HepG2 (cell line): ENCODE measurements at regions of chr3 and their contacts with region 1.

Region 1: DNA sequence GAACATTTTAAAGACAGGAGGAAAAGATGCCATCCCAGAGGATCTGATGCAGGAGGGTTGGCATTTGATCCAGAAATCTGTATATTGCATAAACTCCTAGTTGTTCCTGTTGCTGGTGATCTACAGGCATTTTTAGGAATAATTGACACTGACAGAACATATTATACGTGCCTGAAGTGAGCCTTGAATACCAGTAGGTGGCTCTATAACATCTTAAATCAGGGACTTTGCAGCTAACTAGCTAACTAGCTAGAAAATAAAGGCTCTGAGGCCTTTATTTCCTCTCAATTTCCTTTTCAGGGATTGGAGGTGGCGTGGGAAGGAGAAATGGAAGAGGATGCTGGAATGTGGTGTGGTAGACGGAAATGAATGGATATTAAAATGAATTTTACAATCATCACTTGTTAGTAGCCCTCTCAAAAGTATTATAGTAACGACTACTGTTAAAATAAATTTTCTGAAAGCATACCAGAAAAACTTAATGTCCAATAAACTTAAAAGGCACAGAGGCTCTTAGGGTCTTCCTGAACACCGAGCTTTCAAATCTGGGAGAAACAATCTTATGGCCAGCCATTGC is 73.9 kb upstream of the ZBED2 start:
- DNase-seq: peak; percentile 50
- ATAC-seq: peak; percentile 79
- H3K4me3 ChIP-seq: no peak overlapping the region
- H3K27ac ChIP-seq: no peak overlapping the region
- H3K4me1 ChIP-seq: peaks cover 10% of the 10 kb centered on the region
- H3K27me3 ChIP-seq: no peaks in the 10 kb centered on the region; a peak in 1 of 5 replicates
- CTCF ChIP-seq: peak; percentile 81
- EP300 ChIP-seq: no peak
- POLR2A ChIP-seq: no peak
- RAD21 ChIP-seq: peak; percentile 75

Region 2: GRCh38 chr3:111691293-111691909 is 22.4 kb after region 1 on chr3:
- CTCF ChIA-PET with region 1: interaction called, 48 read pairs
- POLR2A ChIA-PET with region 1: no interaction called
- in situ Hi-C with region 1: no loop called
- intact Hi-C with region 1: loop called (anchors 1 kb)
- DNase-seq: peak; percentile 51
- ATAC-seq: peak; percentile 91
- H3K4me3 ChIP-seq: no peak overlapping the region
- H3K27ac ChIP-seq: no peak overlapping the region
- H3K4me1 ChIP-seq: peaks cover 11% of the 10 kb centered on the region
- H3K27me3 ChIP-seq: no peaks in the 10 kb centered on the region
- CTCF ChIP-seq: peak; percentile 63
- EP300 ChIP-seq: no peak
- POLR2A ChIP-seq: no peak
- RAD21 ChIP-seq: peak; percentile 50

Region 3: DNA sequence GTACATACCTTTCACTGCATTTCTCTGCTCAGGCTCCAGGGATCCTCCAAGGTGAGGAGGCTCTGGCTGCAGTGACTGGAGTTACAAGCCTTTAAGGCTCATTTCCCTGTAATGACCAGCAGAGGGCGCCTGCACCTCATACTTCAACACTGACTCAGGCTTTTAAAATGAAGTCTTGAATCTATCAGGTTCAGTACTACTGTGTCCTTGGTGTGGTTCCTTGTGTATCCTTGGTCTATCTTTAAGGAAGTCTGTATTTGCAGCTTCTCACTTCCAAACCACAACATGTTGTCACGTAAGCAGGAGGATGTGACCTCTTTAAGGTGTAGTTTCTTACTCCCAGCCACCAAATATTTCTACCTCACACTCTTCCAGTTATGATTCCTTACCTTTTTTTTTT is 48.6 kb after region 1 on chr3:
- CTCF ChIA-PET with region 1: interaction called, 15 read pairs
- POLR2A ChIA-PET with region 1: interaction called, 3 read pairs
- in situ Hi-C with region 1: no loop called
- intact Hi-C with region 1: loop called (anchors 1 kb)
- DNase-seq: peak; percentile 78
- ATAC-seq: peak; percentile 96
- H3K4me3 ChIP-seq: no peak overlapping the region
- H3K27ac ChIP-seq: no peak overlapping the region
- H3K4me1 ChIP-seq: no peaks in the 10 kb centered on the region
- H3K27me3 ChIP-seq: no peaks in the 10 kb centered on the region
- CTCF ChIP-seq: peak; percentile 94
- EP300 ChIP-seq: no peak
- POLR2A ChIP-seq: no peak
- RAD21 ChIP-seq: peak; percentile 90

Region 4: DNA sequence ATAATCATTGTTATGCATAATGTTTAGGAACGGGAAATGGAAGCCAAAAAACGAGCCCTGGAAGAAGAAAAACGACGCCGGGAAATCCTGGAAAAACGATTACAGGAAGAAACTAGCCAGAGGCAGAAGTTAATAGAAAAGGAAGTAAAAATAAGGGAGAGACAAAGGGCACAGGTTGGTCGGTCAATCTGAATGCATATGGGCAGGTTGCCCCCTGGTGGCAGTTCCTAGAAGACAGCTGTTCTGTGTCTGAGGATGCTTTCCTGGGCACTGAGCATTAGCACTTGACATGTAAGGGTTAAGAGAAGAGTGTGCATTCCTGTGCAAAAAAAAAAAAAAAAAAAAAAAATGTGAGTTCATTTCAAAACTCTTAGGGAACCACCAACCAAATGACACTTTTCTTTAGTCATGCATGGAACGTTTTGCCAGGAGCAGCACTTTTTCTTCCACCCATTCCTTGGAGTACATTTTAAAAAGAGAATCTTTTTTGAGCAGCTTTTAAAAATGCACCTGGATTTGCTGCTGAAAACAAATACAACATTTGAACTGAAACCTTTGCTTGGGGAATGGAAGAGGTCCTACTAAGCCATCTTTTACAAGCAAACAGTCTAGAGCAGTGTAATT is 298.8 kb after region 1 on chr3:
- CTCF ChIA-PET with region 1: interaction called, 9 read pairs
- POLR2A ChIA-PET with region 1: no interaction called
- in situ Hi-C with region 1: no loop called
- intact Hi-C with region 1: loop called (anchors 1 kb)
- DNase-seq: peak; percentile 66
- ATAC-seq: peak; percentile 95
- H3K4me3 ChIP-seq: no peak overlapping the region
- H3K27ac ChIP-seq: no peak overlapping the region
- H3K4me1 ChIP-seq: peaks cover 10% of the 10 kb centered on the region
- H3K27me3 ChIP-seq: no peaks in the 10 kb centered on the region
- CTCF ChIP-seq: peak; percentile 86
- EP300 ChIP-seq: no peak
- POLR2A ChIP-seq: no peak
- RAD21 ChIP-seq: peak; percentile 72

Region 5: DNA sequence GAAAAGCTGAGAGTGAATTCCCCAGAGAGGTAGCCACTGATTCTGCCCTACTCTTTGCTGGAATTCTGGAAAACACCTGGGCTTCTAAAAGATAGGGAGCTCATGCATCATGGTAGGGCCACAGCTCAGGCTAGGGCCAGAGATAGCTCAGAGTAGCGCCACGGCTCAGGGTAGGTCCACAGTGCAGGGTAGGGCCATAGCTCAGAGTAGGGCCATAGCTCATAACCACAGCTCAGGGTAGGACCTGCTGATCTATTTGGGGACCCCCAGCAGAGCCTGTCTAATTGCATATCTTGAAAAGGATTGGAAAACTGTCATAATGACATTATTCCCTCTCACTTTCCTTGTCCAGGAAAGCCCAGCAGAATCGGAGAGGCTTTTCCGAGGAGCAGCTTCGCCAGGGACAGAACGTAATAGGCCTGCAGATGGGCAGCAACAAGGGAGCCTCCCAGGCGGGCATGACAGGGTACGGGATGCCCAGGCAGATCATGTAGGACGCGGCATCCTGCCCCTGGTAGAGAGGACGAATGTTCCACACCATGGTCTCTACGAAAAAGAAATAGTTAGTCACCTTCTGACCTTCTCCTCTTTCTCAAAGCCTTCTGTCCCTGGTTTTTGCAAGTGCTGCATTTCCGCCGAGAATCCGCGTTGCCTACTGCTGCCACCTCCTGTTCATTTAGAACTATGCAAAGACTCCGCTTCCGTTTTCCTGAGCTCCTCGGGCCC is 344.2 kb after region 1 on chr3:
- CTCF ChIA-PET with region 1: interaction called, 6 read pairs
- POLR2A ChIA-PET with region 1: no interaction called
- in situ Hi-C with region 1: no loop called
- intact Hi-C with region 1: loop called (anchors 1 kb)
- DNase-seq: peak; percentile 49
- ATAC-seq: peak; percentile 97
- H3K4me3 ChIP-seq: peak overlapping the region; percentile 46 to 74 (median 53); a peak in 5 of 6 replicates
- H3K27ac ChIP-seq: no peak overlapping the region
- H3K4me1 ChIP-seq: peaks cover 17% of the 10 kb centered on the region
- H3K27me3 ChIP-seq: peaks cover 0 to 5% of the 10 kb centered on the region in 2 experiments; a peak in 1 of 5 replicates
- CTCF ChIP-seq: peak; percentile 81
- EP300 ChIP-seq: no peak
- POLR2A ChIP-seq: no peak
- RAD21 ChIP-seq: peak; percentile 57